Posterior vena cava (tissue), 2 donors: ENCODE measurements at regions of chr10 and their contacts with region 1.

Region 1: GRCh38 chr10:13956826-13957225 is 370.1 kb downstream of the PRPF18 start:
- DNase-seq: peak; percentile 92

Region 2: DNA sequence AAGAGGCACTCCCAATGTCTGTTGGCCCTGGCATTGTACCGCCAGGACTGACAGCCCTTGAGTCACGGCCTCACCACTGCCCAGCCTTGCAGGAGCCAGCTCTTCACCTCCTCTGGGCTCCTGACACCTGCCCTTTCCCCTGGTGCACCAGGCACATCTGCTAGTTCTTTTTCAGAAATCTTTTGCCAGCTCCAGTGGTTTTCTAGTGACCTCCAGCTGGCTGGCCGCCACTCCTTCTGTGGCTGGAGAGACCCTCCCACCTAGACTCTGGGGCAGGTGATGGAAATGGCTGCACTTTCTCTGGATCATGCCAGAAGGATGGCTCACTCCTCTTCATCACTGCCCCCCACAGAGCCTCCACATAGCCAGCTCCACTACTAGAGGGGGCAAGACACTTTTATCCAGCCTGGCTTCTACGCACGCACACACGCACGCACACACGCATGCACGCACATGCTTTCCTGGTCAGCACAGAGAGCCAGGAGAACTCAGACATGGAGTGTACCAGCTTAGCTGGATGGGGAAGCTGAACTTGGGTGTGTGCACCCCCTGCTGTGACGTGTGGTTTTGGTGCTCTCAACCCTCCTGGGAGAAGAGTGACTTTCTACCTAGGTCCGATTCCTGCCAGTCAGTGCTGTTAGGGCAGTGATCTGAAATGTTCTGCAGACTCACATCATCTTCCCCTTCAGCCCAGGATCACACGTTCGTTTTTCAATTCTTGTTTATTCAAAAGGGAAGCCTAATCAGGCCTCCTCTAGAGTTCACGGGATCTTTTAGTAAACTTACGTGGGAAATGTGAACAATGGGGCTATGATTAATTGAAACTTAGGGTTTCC is 148.1 kb before region 1 on chr10:
- intact Hi-C with region 1: loop called in 1 of 2 experiments (anchors 10 kb)
- DNase-seq: no peak

Region 3: GRCh38 chr10:13939391-13939790 is 17.4 kb before region 1 on chr10:
- intact Hi-C with region 1: no loop called
- DNase-seq: no peak

Region 4: DNA sequence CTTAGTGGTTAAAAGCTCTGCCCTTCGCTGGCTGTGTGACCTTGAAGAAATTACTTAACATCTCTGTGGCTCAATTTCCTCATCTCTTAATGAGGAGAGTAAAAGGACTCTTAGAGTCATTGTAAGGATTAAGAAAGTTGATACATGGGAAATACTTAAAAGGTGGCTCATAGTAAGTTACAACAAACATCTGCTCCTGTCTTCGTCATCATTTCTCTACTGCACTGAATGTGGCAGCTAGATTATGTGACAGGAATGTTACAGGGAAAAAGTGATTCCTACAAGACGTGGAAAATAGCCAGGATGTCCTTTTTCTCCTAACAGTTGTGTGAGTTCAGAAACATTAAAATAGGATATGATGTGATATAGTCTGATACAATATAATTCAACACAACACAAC is 189.2 kb after region 1 on chr10:
- intact Hi-C with region 1: no loop called
- DNase-seq: no peak

Region 5: GRCh38 chr10:14822879-14823755 is 866.3 kb after region 1 on chr10:
- intact Hi-C with region 1: no loop called
- DNase-seq: no peak